ENCODE measurements at regions of chr6 and their contacts with region 1.

Region 1: DNA sequence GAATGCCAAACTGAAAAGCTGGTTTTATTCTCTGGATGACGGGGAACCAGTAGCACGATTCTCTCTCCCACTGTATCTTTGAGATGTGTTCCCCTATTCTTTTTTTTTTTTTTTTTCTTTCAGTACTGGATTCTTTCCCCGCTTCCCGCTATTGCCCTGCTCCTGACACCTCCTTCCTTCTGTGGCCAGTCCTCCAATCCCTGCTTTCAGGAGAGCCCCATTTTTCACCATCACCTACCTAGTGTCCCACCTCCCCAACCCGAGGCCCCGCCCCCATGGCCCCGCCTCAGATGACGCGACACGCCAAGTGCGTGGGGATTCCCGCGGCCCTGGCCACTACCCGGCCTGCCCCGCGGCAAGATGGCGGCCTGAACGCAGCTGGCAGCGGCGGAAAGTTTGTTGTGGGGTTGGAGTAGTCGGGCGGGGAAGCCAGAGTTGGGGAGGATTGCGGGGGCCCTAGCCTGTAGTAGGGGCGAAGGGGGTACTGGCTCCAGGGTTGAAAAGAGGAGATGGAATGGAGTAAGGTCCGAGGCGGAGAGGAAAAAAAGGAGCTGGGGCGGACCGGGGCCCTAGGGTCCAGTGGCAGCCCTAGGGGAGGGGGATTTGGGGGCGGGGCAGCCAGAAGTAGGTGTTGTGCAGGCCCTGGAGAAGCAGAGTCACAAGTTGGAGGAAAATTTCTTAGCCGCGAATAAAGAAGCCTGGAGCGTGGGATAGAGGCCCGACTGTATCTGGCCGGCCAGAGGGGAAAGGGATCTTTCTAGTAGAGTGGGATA is at the start of gene TJAP1:
- DNase-seq: peak; percentile 98
- ATAC-seq: peak; percentile 100
- H3K4me3 Mint-ChIP-seq: peak within 1 kb of the TSS; percentile 96
- H3K27ac Mint-ChIP-seq: peak within 1 kb of the TSS; percentile 94
- H3K4me1 Mint-ChIP-seq: peaks cover 41% of the 10 kb centered on the region
- H3K27me3 Mint-ChIP-seq: no peaks in the 10 kb centered on the region
- CTCF ChIP-seq: no peak
- total RNA-seq, gene TJAP1: 36.0 and 45.3 TPM in 2 replicates

Region 2: DNA sequence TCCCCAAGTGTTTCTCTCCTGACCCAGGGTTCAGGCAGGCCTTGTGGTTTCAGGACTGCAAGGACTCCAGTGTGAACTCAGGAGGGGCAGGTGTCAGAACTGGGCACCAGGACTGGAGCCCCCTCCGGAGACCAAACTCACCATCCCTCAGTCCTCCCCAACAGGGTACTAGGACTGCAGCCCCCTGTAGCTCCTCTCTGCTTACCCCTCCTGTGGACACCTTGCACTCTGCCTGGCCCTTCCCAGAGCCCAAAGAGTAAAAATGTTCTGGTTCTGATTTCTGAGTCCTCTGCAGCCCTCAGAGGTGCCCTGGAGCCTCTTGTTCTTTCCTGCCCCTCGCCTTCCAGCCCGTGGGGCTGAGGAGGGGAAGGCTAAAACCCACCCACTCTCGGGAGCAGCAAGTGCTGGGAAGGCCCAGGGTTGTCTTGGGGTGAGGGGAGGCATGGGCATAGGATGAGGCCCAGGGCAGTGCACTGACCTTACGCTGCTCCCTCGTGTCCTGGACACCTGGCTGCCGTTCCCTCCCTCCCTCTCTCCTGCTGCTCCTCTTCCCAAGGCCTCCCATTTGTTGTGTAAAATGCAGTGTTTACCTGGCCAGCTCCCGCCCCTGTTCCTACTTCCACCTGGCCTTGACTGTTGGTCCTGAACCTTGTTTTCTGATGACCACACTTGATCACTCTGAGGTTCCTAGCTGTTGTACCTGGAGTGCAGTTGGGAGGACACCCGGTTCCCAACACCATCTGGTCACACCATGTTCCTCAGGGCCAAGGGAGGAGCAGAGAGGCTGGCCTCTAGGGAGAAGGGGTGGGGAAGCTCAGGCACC is 538.2 kb before region 1 on chr6:
- CTCF ChIA-PET with region 1: no interaction called
- POLR2A ChIA-PET with region 1: no interaction called
- intact Hi-C with region 1: no loop called
- DNase-seq: no peak
- ATAC-seq: no peak
- H3K4me3 Mint-ChIP-seq: no peak overlapping the region
- H3K27ac Mint-ChIP-seq: no peak overlapping the region
- H3K4me1 Mint-ChIP-seq: peaks cover 28% of the 10 kb centered on the region
- H3K27me3 Mint-ChIP-seq: no peaks in the 10 kb centered on the region
- CTCF ChIP-seq: no peak

Region 3: GRCh38 chr6:43086022-43086658 is 391.3 kb before region 1 on chr6:
- CTCF ChIA-PET with region 1: no interaction called
- POLR2A ChIA-PET with region 1: interaction called, 10 read pairs
- intact Hi-C with region 1: no loop called
- DNase-seq: no peak
- ATAC-seq: peak; percentile 95
- H3K4me3 Mint-ChIP-seq: no peak overlapping the region
- H3K27ac Mint-ChIP-seq: no peak overlapping the region
- H3K4me1 Mint-ChIP-seq: peaks cover 6% of the 10 kb centered on the region
- H3K27me3 Mint-ChIP-seq: peaks cover 5% of the 10 kb centered on the region
- CTCF ChIP-seq: no peak

Region 4: DNA sequence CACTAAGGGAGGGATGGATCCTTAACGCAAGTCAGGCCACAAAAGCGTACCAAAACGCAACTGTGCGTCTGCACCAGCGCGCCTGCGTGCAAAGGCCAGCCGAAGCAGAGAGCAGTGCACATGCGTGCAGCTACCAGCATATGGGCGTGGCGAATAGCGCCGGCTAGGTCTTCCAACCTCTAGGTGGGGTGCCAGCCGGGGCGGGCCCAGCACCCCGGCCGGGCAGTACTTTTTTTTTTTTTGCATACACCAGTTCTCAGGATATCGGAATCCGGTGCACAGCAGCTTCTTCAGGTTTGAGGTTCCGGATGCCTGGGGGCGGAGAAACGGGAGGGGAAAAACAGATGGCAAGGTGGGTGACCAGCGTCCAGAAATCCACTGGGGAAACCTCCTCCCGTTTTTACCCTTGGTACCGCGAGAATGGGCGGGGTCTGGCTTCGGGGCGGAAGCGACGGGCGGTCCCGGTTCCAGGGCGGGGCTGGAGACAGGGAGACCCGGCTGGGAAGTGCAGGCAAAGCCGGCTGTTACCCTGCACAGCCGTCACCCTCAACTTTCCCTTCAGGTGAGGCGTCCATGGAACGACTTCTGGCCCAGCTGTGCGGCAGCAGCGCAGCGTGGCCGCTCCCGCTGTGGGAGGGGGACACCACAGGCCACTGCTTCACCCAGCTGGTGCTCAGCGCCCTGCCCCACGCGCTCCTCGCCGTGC is 49.9 kb before region 1 on chr6 and contains the start of gene ABCC10:
- CTCF ChIA-PET with region 1: no interaction called
- POLR2A ChIA-PET with region 1: interaction called, 10 read pairs
- intact Hi-C with region 1: loop called (anchors 1 kb)
- DNase-seq: peak; percentile 90
- ATAC-seq: peak; percentile 93
- H3K4me3 Mint-ChIP-seq: peak within 1 kb of the TSS; percentile 95
- H3K27ac Mint-ChIP-seq: peak within 1 kb of the TSS; percentile 95
- H3K4me1 Mint-ChIP-seq: peaks cover 20% of the 10 kb centered on the region
- H3K27me3 Mint-ChIP-seq: no peaks in the 10 kb centered on the region
- CTCF ChIP-seq: no peak
- total RNA-seq, gene ABCC10: 59.5 and 74.6 TPM in 2 replicates

Region 5: GRCh38 chr6:43506667-43507471 is 29.4 kb after region 1 on chr6:
- CTCF ChIA-PET with region 1: interaction called, 5 read pairs
- POLR2A ChIA-PET with region 1: interaction called, 11 read pairs
- intact Hi-C with region 1: loop called (anchors 2 kb)
- DNase-seq: peak; percentile 67
- ATAC-seq: peak; percentile 60
- H3K4me3 Mint-ChIP-seq: no peak overlapping the region
- H3K27ac Mint-ChIP-seq: no peak overlapping the region
- H3K4me1 Mint-ChIP-seq: peaks cover 19% of the 10 kb centered on the region
- H3K27me3 Mint-ChIP-seq: peaks cover 9% of the 10 kb centered on the region
- CTCF ChIP-seq: peak; percentile 53

Region 6: GRCh38 chr6:43524483-43524961 is 47.1 kb after region 1 on chr6:
- CTCF ChIA-PET with region 1: no interaction called
- POLR2A ChIA-PET with region 1: no interaction called
- intact Hi-C with region 1: no loop called
- DNase-seq: no peak
- ATAC-seq: no peak
- H3K4me3 Mint-ChIP-seq: no peak overlapping the region
- H3K27ac Mint-ChIP-seq: no peak overlapping the region
- H3K4me1 Mint-ChIP-seq: no peaks in the 10 kb centered on the region
- H3K27me3 Mint-ChIP-seq: no peaks in the 10 kb centered on the region
- CTCF ChIP-seq: no peak

Region 7: GRCh38 chr6:43575772-43576551 is 98.5 kb after region 1 on chr6 and contains the starts of genes POLH and XPO5:
- CTCF ChIA-PET with region 1: no interaction called
- POLR2A ChIA-PET with region 1: no interaction called
- intact Hi-C with region 1: loop called (anchors 1 kb)
- DNase-seq: peak; percentile 91
- ATAC-seq: peak; percentile 94
- H3K4me3 Mint-ChIP-seq: peak within 1 kb of the TSS; percentile 97
- H3K27ac Mint-ChIP-seq: peak within 1 kb of the TSS; percentile 86
- H3K4me1 Mint-ChIP-seq: peaks cover 38% of the 10 kb centered on the region
- H3K27me3 Mint-ChIP-seq: no peaks in the 10 kb centered on the region
- CTCF ChIP-seq: no peak
- total RNA-seq, gene POLH: 23.3 and 26.5 TPM in 2 replicates
- total RNA-seq, gene XPO5: 54.4 and 59.4 TPM in 2 replicates

Region 8: GRCh38 chr6:43621429-43622180 is 144.2 kb after region 1 on chr6:
- CTCF ChIA-PET with region 1: no interaction called
- POLR2A ChIA-PET with region 1: no interaction called
- intact Hi-C with region 1: no loop called
- DNase-seq: no peak
- ATAC-seq: no peak
- H3K4me3 Mint-ChIP-seq: no peak overlapping the region
- H3K27ac Mint-ChIP-seq: no peak overlapping the region
- H3K4me1 Mint-ChIP-seq: peaks cover 5% of the 10 kb centered on the region
- H3K27me3 Mint-ChIP-seq: no peaks in the 10 kb centered on the region
- CTCF ChIP-seq: no peak